ENCODE measurements at regions of chr20 and their contacts with region 1.

Region 1: DNA sequence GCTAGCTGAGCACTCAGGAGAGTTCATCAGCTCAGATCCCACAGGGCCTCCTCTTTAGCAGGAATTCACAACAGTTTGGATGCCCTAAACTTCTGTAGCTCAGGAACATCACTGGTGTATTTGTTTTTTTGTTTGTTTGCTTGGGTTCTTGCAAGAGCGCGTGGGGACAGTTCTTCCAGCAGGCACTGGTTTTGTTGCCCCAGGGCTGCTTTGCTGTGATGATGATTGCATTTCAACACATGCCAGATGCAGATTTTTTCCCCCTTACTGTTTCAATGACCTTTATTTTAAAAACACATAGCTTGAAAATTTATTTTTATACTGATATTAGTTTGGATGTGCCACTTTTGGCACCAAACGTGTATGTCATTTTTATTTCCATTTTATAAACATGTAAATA is 77.1 kb downstream of the DHX35 start:
- DNase-seq: no peak
- H3K4me3 ChIP-seq: no peak overlapping the region
- H3K27ac ChIP-seq: no peak overlapping the region
- H3K4me1 ChIP-seq: peaks cover 0 to 5% (median 0%) of the 10 kb centered on the region in 4 donors
- H3K27me3 ChIP-seq: no peaks in the 10 kb centered on the region
- CTCF ChIP-seq: no peak

Region 2: DNA sequence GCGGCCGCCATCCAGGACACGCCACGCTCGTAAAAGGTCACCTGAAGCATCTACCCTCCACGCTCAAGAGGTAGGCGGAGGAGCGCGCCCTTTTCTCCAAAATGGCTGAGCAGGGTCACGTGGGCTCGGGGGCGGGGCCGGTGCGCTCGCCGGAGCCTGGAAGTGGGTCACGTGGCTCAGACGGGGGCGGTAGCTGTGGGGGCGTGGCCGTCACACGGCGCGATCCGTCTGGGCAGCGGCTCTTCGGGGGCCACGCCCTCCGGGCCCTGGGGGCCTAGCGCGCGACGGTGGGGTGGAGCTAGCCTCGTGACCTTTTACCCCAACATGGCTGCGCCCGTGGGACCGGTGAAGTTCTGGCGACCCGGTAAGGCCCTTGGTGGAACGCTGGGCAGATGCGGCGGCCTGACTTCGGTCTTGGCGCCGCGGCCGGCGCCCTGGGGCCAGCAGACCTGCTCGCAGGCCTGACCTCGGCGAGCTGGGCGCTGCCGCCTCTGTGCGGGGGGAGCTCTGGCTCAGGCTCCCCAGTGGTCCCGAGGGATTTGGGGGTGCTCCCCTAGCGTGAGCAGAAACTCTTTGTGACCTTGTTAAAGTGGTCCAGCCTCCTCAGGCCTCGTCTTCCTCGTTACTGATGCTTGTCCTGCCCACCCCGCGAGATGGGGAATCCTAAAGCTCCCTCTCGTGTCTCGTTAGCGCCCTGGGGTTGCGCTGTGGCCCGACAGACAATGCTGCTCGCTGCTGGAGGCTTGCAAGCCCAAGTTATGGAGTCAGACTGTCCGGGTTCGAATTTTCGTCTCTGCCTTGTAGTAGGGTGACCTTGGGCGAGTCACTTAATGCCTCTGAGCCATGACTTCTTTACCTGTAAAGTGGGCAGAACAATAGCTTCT is 77.0 kb before region 1 on chr20 and contains the start of gene DHX35:
- intact Hi-C with region 1: loop called (anchors 2 kb)
- DNase-seq: peak; percentile 96 to 99
- H3K4me3 ChIP-seq: peak within 1 kb of the TSS; percentile 76 to 91
- H3K27ac ChIP-seq: peak within 1 kb of the TSS; percentile 79 to 91
- H3K4me1 ChIP-seq: peaks cover 0 to 16% (median 9%) of the 10 kb centered on the region in 4 donors
- H3K27me3 ChIP-seq: no peaks in the 10 kb centered on the region
- CTCF ChIP-seq: peak; percentile 5 to 27

Region 3: GRCh38 chr20:38997622-38998021 is 41.6 kb before region 1 on chr20:
- intact Hi-C with region 1: no loop called
- DNase-seq: no peak
- H3K4me3 ChIP-seq: no peak overlapping the region
- H3K27ac ChIP-seq: no peak overlapping the region
- H3K4me1 ChIP-seq: no peaks in the 10 kb centered on the region
- H3K27me3 ChIP-seq: no peaks in the 10 kb centered on the region
- CTCF ChIP-seq: no peak

Measured in tibial artery (tissue), 4 donors.